CD8-positive, alpha-beta T cell (primary cell): ENCODE measurements at regions of chr4 and their contacts with region 1.

Region 1: GRCh38 chr4:69689599-69689998 is 36.6 kb upstream of the UGT2A1 start:
- DNase-seq: peak in 2 of 9 experiments; percentile 43 to 62
- ATAC-seq: no peak
- H3K4me3 ChIP-seq: no peak overlapping the region
- H3K4me3 Mint-ChIP-seq: peak overlapping the region; percentile 41
- H3K27ac ChIP-seq: no peak overlapping the region
- H3K27ac Mint-ChIP-seq: no peak overlapping the region
- H3K4me1 ChIP-seq: no peaks in the 10 kb centered on the region
- H3K4me1 Mint-ChIP-seq: peaks cover 4% of the 10 kb centered on the region
- H3K27me3 ChIP-seq: no peaks in the 10 kb centered on the region
- H3K27me3 Mint-ChIP-seq: no peaks in the 10 kb centered on the region
- CTCF ChIP-seq: peak; percentile 83

Region 2: GRCh38 chr4:68498413-68499007 is 1191.1 kb before region 1 on chr4:
- CTCF ChIA-PET with region 1: no interaction called
- POLR2A ChIA-PET with region 1: no interaction called
- intact Hi-C with region 1: loop called in 1 of 2 experiments (anchors 5 kb)
- DNase-seq: peak; percentile 18 to 72 (median 54)
- ATAC-seq: peak; percentile 99
- H3K4me3 ChIP-seq: no peak overlapping the region
- H3K4me3 Mint-ChIP-seq: no peak overlapping the region
- H3K27ac ChIP-seq: no peak overlapping the region
- H3K27ac Mint-ChIP-seq: no peak overlapping the region
- H3K4me1 ChIP-seq: no peaks in the 10 kb centered on the region
- H3K4me1 Mint-ChIP-seq: peaks cover 9% of the 10 kb centered on the region
- H3K27me3 ChIP-seq: no peaks in the 10 kb centered on the region
- H3K27me3 Mint-ChIP-seq: no peaks in the 10 kb centered on the region
- CTCF ChIP-seq: peak; percentile 88

Region 3: DNA sequence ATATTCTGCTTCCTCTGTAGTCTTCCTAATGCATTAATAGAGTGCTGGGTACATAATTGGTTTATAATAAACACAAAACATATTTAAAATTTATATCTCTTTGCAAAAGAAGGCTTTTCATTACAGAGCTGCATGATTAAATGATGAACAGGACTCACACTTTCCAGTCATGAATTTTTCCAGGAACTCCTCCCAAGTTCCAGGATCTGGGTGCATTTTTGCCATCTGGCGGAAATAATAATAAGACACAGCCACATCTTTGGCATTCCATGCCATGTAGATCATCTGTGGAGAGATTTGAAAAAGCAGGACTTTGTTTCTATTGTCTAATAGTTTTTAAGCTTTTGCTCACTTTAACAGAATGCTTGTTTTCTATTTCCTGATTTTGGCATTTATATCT is 111.0 kb after region 1 on chr4:
- CTCF ChIA-PET with region 1: no interaction called
- POLR2A ChIA-PET with region 1: no interaction called
- intact Hi-C with region 1: no loop called
- DNase-seq: no peak
- ATAC-seq: no peak
- H3K4me3 ChIP-seq: no peak overlapping the region
- H3K4me3 Mint-ChIP-seq: no peak overlapping the region
- H3K27ac ChIP-seq: no peak overlapping the region
- H3K27ac Mint-ChIP-seq: no peak overlapping the region
- H3K4me1 ChIP-seq: no peaks in the 10 kb centered on the region
- H3K4me1 Mint-ChIP-seq: no peaks in the 10 kb centered on the region
- H3K27me3 ChIP-seq: no peaks in the 10 kb centered on the region
- H3K27me3 Mint-ChIP-seq: no peaks in the 10 kb centered on the region
- CTCF ChIP-seq: no peak

Region 4: GRCh38 chr4:69823481-69824186 is 134.0 kb after region 1 on chr4:
- CTCF ChIA-PET with region 1: interaction called, 39 read pairs
- POLR2A ChIA-PET with region 1: no interaction called
- intact Hi-C with region 1: loop called (anchors 1 kb)
- DNase-seq: peak in 8 of 9 experiments; percentile 23 to 73 (median 52)
- ATAC-seq: peak; percentile 93
- H3K4me3 ChIP-seq: no peak overlapping the region
- H3K4me3 Mint-ChIP-seq: no peak overlapping the region
- H3K27ac ChIP-seq: no peak overlapping the region
- H3K27ac Mint-ChIP-seq: no peak overlapping the region
- H3K4me1 ChIP-seq: peaks cover 7% of the 10 kb centered on the region
- H3K4me1 Mint-ChIP-seq: peaks cover 8% of the 10 kb centered on the region
- H3K27me3 ChIP-seq: no peaks in the 10 kb centered on the region
- H3K27me3 Mint-ChIP-seq: no peaks in the 10 kb centered on the region
- CTCF ChIP-seq: peak; percentile 63

Region 5: GRCh38 chr4:70187029-70187615 is 497.5 kb after region 1 on chr4:
- CTCF ChIA-PET with region 1: no interaction called
- POLR2A ChIA-PET with region 1: no interaction called
- intact Hi-C with region 1: loop called in 1 of 2 experiments (anchors 5 kb)
- DNase-seq: no peak
- ATAC-seq: no peak
- H3K4me3 ChIP-seq: no peak overlapping the region
- H3K4me3 Mint-ChIP-seq: no peak overlapping the region
- H3K27ac ChIP-seq: no peak overlapping the region
- H3K27ac Mint-ChIP-seq: no peak overlapping the region
- H3K4me1 ChIP-seq: no peaks in the 10 kb centered on the region
- H3K4me1 Mint-ChIP-seq: no peaks in the 10 kb centered on the region
- H3K27me3 ChIP-seq: no peaks in the 10 kb centered on the region
- H3K27me3 Mint-ChIP-seq: no peaks in the 10 kb centered on the region
- CTCF ChIP-seq: no peak

Region 6: GRCh38 chr4:70559211-70559830 is 869.7 kb after region 1 on chr4:
- CTCF ChIA-PET with region 1: no interaction called
- POLR2A ChIA-PET with region 1: no interaction called
- intact Hi-C with region 1: loop called (anchors 2 to 5 kb)
- DNase-seq: peak; percentile 3 to 54 (median 37)
- ATAC-seq: no peak
- H3K4me3 ChIP-seq: no peak overlapping the region
- H3K4me3 Mint-ChIP-seq: no peak overlapping the region
- H3K27ac ChIP-seq: no peak overlapping the region
- H3K27ac Mint-ChIP-seq: no peak overlapping the region
- H3K4me1 ChIP-seq: no peaks in the 10 kb centered on the region
- H3K4me1 Mint-ChIP-seq: peaks cover 10% of the 10 kb centered on the region
- H3K27me3 ChIP-seq: no peaks in the 10 kb centered on the region
- H3K27me3 Mint-ChIP-seq: no peaks in the 10 kb centered on the region
- CTCF ChIP-seq: peak; percentile 66